ENCODE measurements at regions of chr2 and their contacts with region 1.

Region 1: GRCh38 chr2:60998628-60999545 is 18.6 kb upstream of the PEX13 start:
- DNase-seq: peak in 2 of 4 donors; percentile 34 to 55
- ATAC-seq: peak; percentile 91
- H3K4me3 ChIP-seq: no peak overlapping the region
- H3K27ac ChIP-seq: no peak overlapping the region
- H3K4me1 ChIP-seq: no peaks in the 10 kb centered on the region
- H3K27me3 ChIP-seq: no peaks in the 10 kb centered on the region
- CTCF ChIP-seq: peak; percentile 52 to 61

Region 2: GRCh38 chr2:60707750-60708371 is 291.0 kb before region 1 on chr2:
- intact Hi-C with region 1: loop called in 1 of 2 experiments (anchors 10 kb)
- DNase-seq: peak in 2 of 4 donors; percentile 22 to 33
- ATAC-seq: peak; percentile 84
- H3K4me3 ChIP-seq: no peak overlapping the region
- H3K27ac ChIP-seq: no peak overlapping the region
- H3K4me1 ChIP-seq: no peaks in the 10 kb centered on the region
- H3K27me3 ChIP-seq: no peaks in the 10 kb centered on the region
- CTCF ChIP-seq: peak; percentile 62 to 66

Region 3: GRCh38 chr2:60796573-60797509 is 202.0 kb before region 1 on chr2:
- intact Hi-C with region 1: loop called in 1 of 2 experiments (anchors 5 kb)
- DNase-seq: no peak
- ATAC-seq: peak; percentile 76
- H3K4me3 ChIP-seq: no peak overlapping the region
- H3K27ac ChIP-seq: peak overlapping the region; percentile 3 to 83
- H3K4me1 ChIP-seq: peaks cover 0 to 16% of the 10 kb centered on the region in 2 donors
- H3K27me3 ChIP-seq: no peaks in the 10 kb centered on the region
- CTCF ChIP-seq: no peak